Endothelial cell of umbilical vein (primary cell): ENCODE measurements at regions of chr18 and their contacts with region 1.

Region 1: DNA sequence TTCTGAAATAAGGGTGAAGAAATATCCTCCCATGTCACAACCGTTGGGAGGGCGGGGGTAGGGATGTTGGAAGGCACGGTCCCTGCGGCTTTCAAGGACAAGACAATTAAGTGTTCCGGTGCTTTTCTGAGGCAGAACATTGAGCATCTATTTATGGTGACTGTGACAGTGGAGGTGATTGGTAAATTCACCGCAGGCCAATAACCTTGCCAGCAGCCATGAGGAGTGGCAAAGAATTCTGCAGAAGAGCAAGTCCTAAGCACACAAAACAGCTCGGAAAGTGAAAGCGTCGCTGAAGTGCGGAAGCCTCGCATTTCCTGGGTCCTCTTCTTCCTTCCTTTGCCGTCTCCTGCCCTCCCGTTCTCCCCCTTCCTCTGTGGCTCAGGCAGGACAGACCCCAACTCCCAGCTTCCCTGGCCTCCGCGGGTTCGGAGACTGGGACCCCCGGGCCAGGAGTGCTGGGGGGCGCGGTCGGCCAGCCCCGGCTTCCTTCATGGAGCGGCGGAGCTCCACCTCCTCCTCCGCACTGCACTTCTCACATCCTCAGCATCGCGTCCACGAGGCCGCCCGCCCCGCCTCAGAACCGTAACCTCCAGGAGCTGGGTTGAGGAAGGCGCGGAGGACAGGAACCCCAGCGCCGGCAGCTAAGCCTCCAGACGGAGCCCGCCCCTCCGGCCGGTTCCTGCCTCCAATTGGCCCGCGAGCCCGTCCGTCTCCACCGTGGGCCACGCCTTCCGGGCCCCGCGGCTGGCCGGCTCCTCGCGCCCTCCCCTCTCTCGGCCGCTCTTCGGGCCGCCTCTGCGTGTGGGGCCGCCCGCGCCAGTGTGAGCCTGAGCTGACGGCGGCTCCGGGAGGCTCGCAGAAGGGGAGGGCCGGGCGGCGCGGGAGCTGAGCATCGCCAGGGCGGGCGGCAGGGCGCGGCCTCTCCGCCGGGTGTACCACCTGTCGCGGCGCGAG is at the start of gene ME2:
- DNase-seq: peak; percentile 93
- H3K4me3 ChIP-seq: peak within 1 kb of the TSS; percentile 50 to 94 (median 69)
- H3K27ac ChIP-seq: peak within 1 kb of the TSS; percentile 42
- H3K4me1 ChIP-seq: peaks cover 9% of the 10 kb centered on the region
- H3K27me3 ChIP-seq: no peaks in the 10 kb centered on the region
- CTCF ChIP-seq: no peak
- POLR2A ChIP-seq: peak; percentile 73
- total RNA-seq, gene ME2: 39.6 and 42.4 TPM in 2 replicates

Region 2: GRCh38 chr18:50836521-50836957 is 42.1 kb before region 1 on chr18:
- CTCF ChIA-PET with region 1: no interaction called
- POLR2A ChIA-PET with region 1: no interaction called
- dilution Hi-C with region 1: no loop called
- intact Hi-C with region 1: loop called (anchors 1 kb)
- DNase-seq: peak; percentile 84
- H3K4me3 ChIP-seq: no peak overlapping the region
- H3K27ac ChIP-seq: no peak overlapping the region
- H3K4me1 ChIP-seq: peaks cover 12% of the 10 kb centered on the region
- H3K27me3 ChIP-seq: peaks cover 0 to 3% of the 10 kb centered on the region in 2 experiments
- CTCF ChIP-seq: no peak
- POLR2A ChIP-seq: no peak

Region 3: GRCh38 chr18:50866765-50867164 is 11.9 kb before region 1 on chr18:
- CTCF ChIA-PET with region 1: interaction called, 13 read pairs
- POLR2A ChIA-PET with region 1: interaction called, 3 read pairs
- dilution Hi-C with region 1: no loop called
- intact Hi-C with region 1: no loop called
- DNase-seq: peak; percentile 12
- H3K4me3 ChIP-seq: no peak overlapping the region
- H3K27ac ChIP-seq: no peak overlapping the region
- H3K4me1 ChIP-seq: peaks cover 3% of the 10 kb centered on the region
- H3K27me3 ChIP-seq: peaks cover 0 to 3% of the 10 kb centered on the region in 2 experiments
- CTCF ChIP-seq: no peak
- POLR2A ChIP-seq: no peak

Region 4: DNA sequence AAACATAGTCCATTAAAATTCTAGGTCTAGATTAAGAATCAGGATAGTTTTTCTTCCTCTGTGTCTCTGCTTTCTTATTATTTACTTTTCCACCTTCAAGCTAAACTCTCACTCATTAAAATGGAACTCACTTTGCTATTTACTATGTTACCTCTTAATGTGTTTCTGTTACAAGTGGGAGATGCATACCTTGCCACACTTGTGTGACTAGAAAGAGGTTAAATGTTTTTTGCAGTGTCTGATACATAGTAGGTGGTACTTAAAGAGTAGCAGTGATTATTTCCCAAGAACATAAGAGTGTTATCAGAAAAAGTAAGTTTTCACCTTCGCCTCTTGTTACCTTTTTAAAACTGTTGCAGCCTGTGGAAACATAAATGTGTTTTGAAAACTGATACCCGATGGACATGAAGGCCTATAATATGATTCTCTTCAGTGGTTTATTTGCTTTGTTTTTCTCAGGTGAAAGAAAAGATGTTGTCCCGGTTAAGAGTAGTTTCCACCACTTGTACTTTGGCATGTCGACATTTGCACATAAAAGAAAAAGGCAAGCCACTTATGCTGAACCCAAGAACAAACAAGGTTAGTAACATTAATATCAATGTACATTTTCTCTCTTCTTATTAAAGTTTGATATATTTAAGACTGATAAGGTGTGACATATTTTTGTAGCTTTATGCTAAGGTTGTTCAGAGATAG is 16.9 kb after region 1 on chr18:
- CTCF ChIA-PET with region 1: interaction called, 3 read pairs
- POLR2A ChIA-PET with region 1: no interaction called
- dilution Hi-C with region 1: no loop called
- intact Hi-C with region 1: loop called (anchors 1 kb)
- DNase-seq: no peak
- H3K4me3 ChIP-seq: no peak overlapping the region
- H3K27ac ChIP-seq: no peak overlapping the region
- H3K4me1 ChIP-seq: no peaks in the 10 kb centered on the region
- H3K27me3 ChIP-seq: no peaks in the 10 kb centered on the region
- CTCF ChIP-seq: no peak
- POLR2A ChIP-seq: no peak

Region 5: DNA sequence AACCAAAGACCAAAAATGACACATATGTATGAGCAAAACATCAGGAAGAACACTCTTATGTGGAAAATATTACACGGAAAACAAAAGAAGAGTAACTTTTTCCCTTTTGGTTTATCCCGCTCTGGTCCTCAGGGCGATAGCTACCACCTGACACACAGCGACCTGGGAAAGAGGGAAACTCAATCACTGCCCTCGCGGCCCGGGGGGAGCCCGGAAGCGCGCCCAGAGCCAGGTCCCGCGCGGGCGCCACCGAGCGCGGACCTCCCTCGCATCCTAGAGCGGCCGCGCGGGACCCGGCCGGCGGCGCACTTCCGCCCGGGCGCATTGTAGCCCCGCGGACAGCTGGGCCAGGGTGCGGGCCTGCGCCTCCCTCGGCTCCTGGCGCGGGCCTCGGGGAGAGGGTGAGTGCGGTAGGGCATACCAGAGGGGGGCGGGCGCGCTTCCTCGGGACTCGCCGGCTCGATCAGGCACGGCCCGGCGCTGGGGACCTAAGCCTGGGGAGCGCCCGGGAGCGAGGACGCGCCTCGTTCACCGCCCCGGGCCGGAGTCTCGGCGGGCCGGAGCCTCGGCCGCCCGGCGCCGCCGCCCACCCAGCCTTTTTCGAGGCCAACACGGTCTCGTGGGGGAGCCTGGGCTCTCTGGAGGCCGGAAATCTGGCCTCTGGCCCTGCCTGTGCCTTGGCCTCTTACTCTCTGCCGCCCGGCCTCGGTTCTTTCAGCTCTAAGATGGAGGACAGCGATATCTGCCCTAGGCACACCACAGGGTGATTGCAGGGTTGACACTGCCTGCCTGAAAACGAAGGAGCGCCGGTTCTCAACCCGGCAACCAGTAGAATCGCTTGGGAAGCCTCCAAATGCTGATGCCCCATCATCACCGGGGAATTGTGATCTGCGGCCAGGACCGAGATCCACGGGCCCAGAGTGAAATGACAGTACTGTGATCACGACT is 89.4 kb after region 1 on chr18 and contains the start of gene ELAC1:
- CTCF ChIA-PET with region 1: no interaction called
- POLR2A ChIA-PET with region 1: interaction called, 7 read pairs
- dilution Hi-C with region 1: no loop called
- intact Hi-C with region 1: loop called (anchors 1 kb)
- DNase-seq: peak; percentile 75
- H3K4me3 ChIP-seq: peak within 1 kb of the TSS; percentile 58 to 95 (median 93)
- H3K27ac ChIP-seq: peak within 1 kb of the TSS; percentile 87
- H3K4me1 ChIP-seq: peaks cover 11% of the 10 kb centered on the region
- H3K27me3 ChIP-seq: no peaks in the 10 kb centered on the region
- CTCF ChIP-seq: no peak
- POLR2A ChIP-seq: peak; percentile 94
- total RNA-seq, gene ELAC1: 6.0 and 7.6 TPM in 2 replicates

Region 6: GRCh38 chr18:51029694-51030536 is 151.3 kb after region 1 on chr18 and contains the start of gene SMAD4:
- CTCF ChIA-PET with region 1: no interaction called
- POLR2A ChIA-PET with region 1: no interaction called
- dilution Hi-C with region 1: no loop called
- intact Hi-C with region 1: loop called (anchors 1 kb)
- DNase-seq: peak; percentile 97
- H3K4me3 ChIP-seq: peak within 1 kb of the TSS; percentile 64 to 87 (median 87)
- H3K27ac ChIP-seq: peak within 1 kb of the TSS; percentile 93
- H3K4me1 ChIP-seq: peaks cover 21% of the 10 kb centered on the region
- H3K27me3 ChIP-seq: no peaks in the 10 kb centered on the region
- CTCF ChIP-seq: no peak
- POLR2A ChIP-seq: peak; percentile 85
- total RNA-seq, gene SMAD4: 79.3 and 82.8 TPM in 2 replicates

Region 7: GRCh38 chr18:51051105-51051712 is 172.6 kb after region 1 on chr18:
- CTCF ChIA-PET with region 1: no interaction called
- POLR2A ChIA-PET with region 1: no interaction called
- dilution Hi-C with region 1: no loop called
- intact Hi-C with region 1: loop called (anchors 1 kb)
- DNase-seq: peak; percentile 56
- H3K4me3 ChIP-seq: no peak overlapping the region
- H3K27ac ChIP-seq: no peak overlapping the region
- H3K4me1 ChIP-seq: no peaks in the 10 kb centered on the region
- H3K27me3 ChIP-seq: no peaks in the 10 kb centered on the region
- CTCF ChIP-seq: peak; percentile 64 to 71
- POLR2A ChIP-seq: no peak